ENCODE measurements at regions of chr2 and their contacts with region 1.

Region 1: GRCh38 chr2:8525582-8526402 is 156.1 kb upstream of the ID2 start:
- DNase-seq: peak; percentile 82
- H3K4me3 ChIP-seq: peak overlapping the region; percentile 37
- H3K27ac ChIP-seq: peak overlapping the region; percentile 95
- H3K4me1 ChIP-seq: peaks cover 100% of the 10 kb centered on the region
- CTCF ChIP-seq: peak; percentile 60

Region 2: DNA sequence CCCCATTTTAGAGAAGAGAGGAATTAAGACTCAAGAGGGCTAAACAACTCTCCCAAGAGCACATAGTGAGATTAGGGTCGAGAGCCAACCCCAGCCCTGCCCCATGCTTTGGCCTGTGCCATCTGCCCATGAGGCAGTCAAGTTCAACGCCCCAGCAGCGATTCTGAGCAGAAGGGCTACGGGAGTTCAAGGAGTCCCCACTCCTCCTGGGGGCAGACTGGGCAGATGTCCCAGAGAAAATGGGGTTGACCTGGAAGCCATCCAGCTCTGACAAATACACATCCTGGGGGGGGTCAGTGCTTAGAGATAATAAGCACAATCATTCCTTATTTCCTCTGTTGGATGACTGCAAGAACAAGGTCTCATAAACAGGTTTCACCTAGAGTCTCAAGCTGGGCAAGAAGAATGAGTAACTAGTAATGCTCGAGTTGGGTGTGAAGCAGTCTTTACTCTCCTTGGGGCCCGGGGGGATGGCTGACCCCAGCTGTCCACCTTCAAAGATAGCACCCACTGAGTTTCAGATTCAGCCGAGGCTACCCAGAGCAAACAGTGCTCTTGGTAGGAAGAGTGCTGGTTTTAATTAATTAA is 892.1 kb before region 1 on chr2:
- CTCF ChIA-PET with region 1: no interaction called
- POLR2A ChIA-PET with region 1: no interaction called
- intact Hi-C with region 1: loop called (anchors 10 kb)
- DNase-seq: peak; percentile 25
- H3K4me3 ChIP-seq: no peak overlapping the region
- H3K27ac ChIP-seq: peak overlapping the region; percentile 62
- H3K4me1 ChIP-seq: peaks cover 34% of the 10 kb centered on the region
- CTCF ChIP-seq: no peak

Region 3: DNA sequence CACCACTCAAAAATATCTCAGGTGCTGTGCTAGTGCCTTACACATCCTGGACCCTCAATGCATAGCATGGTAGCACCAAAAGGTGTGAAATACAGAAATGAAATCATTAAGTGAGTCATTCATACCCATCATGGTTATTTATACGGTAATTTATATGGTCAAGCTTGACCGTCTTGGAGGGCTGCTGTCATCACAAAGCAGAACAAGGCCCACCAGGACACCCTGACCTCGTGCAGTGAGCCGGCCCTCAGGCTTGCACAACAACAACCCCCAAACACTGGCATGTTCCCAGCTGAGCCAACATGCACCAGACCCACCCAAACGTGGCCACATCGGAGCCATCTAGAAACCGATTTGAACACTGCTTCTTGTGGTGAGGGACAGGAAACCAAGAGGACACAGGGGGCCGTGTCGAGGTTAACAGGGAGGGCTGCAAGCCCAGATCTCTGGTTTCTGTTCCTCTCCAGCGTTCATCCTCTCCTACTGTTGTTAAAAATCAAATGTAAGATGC is 222.4 kb before region 1 on chr2:
- CTCF ChIA-PET with region 1: no interaction called
- POLR2A ChIA-PET with region 1: no interaction called
- intact Hi-C with region 1: loop called (anchors 2 kb)
- DNase-seq: peak; percentile 96
- H3K4me3 ChIP-seq: peak overlapping the region; percentile 36
- H3K27ac ChIP-seq: peak overlapping the region; percentile 76
- H3K4me1 ChIP-seq: peaks cover 71% of the 10 kb centered on the region
- CTCF ChIP-seq: peak; percentile 70

Region 4: GRCh38 chr2:8514796-8515758 is 10.7 kb before region 1 on chr2:
- CTCF ChIA-PET with region 1: interaction called, 4 read pairs
- POLR2A ChIA-PET with region 1: interaction called, 18 read pairs
- intact Hi-C with region 1: no loop called
- DNase-seq: peak; percentile 88
- H3K4me3 ChIP-seq: peak overlapping the region; percentile 47
- H3K27ac ChIP-seq: peak overlapping the region; percentile 95
- H3K4me1 ChIP-seq: peaks cover 68% of the 10 kb centered on the region
- CTCF ChIP-seq: no peak

Region 5: DNA sequence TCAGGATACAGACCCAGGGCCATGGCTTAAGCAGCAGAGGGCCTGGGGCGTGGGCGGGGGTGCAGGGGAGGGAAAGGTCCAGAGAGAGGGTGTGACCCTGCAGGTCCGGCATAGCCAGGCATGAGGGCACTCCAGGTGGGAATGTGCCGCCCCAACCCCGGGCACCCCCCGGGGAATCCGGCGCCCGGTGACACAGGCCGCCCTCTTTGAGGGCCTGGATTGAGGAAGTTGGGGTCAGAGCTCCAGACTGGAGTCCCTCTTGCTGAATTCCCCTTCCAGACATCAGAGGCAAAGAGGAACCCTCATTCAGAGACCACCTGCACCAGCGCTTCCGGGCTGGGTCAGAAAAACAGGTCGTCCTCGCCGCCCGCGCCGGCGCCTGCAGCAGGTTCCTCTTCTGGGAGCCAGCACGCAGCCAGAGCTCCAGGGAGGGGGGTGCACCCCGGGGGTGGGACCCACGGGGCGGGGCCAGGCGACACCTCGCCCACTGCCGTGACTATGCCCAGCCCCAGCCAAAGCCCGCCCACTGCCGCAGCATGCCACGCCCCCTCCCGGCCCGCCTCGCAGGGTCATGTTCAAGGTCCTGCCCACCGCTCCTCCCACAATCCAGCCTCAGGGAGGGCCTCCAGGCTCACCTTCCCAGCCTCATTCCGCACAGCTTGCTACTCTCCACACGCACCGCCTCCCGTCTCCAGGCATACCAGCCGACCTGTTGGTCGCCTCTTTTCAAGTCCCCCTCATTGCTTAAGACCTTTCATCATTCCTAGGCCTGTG is 57.8 kb after region 1 on chr2:
- CTCF ChIA-PET with region 1: interaction called, 4 read pairs
- POLR2A ChIA-PET with region 1: interaction called, 34 read pairs
- intact Hi-C with region 1: loop called (anchors 2 kb)
- DNase-seq: peak; percentile 99
- H3K4me3 ChIP-seq: peak overlapping the region; percentile 61
- H3K27ac ChIP-seq: peak overlapping the region; percentile 98
- H3K4me1 ChIP-seq: peaks cover 97% of the 10 kb centered on the region
- CTCF ChIP-seq: no peak

Measured in OCI-LY7 (cell line).